ENCODE measurements at regions of chr1 and their contacts with region 1.

Region 1: DNA sequence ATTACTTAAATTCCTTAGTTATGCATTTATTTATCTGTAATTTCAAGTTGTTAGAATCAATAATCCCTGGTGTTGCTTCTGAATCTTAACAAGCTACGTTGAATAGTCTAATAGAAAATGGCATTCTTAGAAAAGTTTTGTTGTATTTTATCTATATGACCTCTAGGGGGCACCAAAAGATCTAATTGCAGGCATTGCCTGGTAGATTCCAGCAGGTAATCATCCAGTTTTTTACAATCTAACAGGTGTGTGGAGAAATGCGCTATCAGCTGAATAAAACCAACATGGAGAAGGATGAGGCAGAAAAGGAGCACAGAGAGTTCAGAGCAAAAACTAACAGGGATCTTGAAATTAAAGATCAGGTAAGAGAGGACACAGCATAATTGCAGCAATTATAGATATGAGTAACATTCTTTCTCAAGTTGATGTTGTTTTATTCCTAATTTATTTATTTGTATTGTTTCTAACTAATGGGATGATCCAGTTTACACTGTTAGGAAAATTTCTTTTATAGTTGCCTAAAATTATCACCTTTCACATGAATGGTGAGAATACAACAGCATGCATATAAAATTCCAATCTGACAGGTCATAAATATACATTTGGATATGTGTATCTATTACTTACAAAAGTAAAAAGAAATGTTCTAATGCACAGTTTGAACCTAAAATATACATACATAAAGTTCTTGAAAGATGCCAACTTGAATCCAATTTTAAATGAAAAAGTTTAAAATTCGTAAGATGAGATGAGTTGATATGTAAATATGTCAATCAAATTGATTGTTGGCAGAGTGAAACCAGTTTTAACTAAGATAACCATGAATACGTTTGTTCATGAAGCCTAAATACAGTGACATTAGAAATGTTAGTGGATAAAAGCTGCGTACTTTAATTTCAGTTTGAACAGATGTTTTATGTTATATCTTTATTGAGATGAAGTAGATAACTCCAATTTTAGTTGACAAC is 88.4 kb downstream of the SDCCAG8 start:
- DNase-seq: peak; percentile 25 to 51
- ATAC-seq: peak; percentile 66 to 75; a peak in 5 of 6 replicates
- H3K4me3 ChIP-seq: no peak overlapping the region
- H3K27ac ChIP-seq: no peak overlapping the region
- H3K4me1 ChIP-seq: peaks cover 11% of the 10 kb centered on the region; the same call in 2 of the 3 replicates
- CTCF ChIP-seq: peak; percentile 93
- EP300 ChIP-seq: no peak
- POLR2A ChIP-seq: no peak
- RAD21 ChIP-seq: peak; percentile 88 to 89

Region 2: GRCh38 chr1:242966892-242967291 is 377.4 kb before region 1 on chr1:
- CTCF ChIA-PET with region 1: no interaction called
- POLR2A ChIA-PET with region 1: no interaction called
- DNase-seq: no peak
- ATAC-seq: no peak
- H3K4me3 ChIP-seq: no peak overlapping the region
- H3K27ac ChIP-seq: no peak overlapping the region
- H3K4me1 ChIP-seq: no peaks in the 10 kb centered on the region
- CTCF ChIP-seq: no peak
- EP300 ChIP-seq: no peak
- POLR2A ChIP-seq: no peak
- RAD21 ChIP-seq: no peak

Region 3: GRCh38 chr1:243354511-243355153 is 10.4 kb after region 1 on chr1:
- CTCF ChIA-PET with region 1: interaction called, 10 read pairs
- POLR2A ChIA-PET with region 1: no interaction called
- DNase-seq: no peak
- ATAC-seq: no peak
- H3K4me3 ChIP-seq: no peak overlapping the region
- H3K27ac ChIP-seq: no peak overlapping the region
- H3K4me1 ChIP-seq: no peaks in the 10 kb centered on the region
- CTCF ChIP-seq: no peak
- EP300 ChIP-seq: no peak
- POLR2A ChIP-seq: no peak
- RAD21 ChIP-seq: no peak

Region 4: GRCh38 chr1:243413431-243414151 is 69.3 kb after region 1 on chr1:
- CTCF ChIA-PET with region 1: no interaction called
- POLR2A ChIA-PET with region 1: no interaction called
- DNase-seq: no peak
- ATAC-seq: no peak
- H3K4me3 ChIP-seq: no peak overlapping the region
- H3K27ac ChIP-seq: no peak overlapping the region
- H3K4me1 ChIP-seq: no peaks in the 10 kb centered on the region
- CTCF ChIP-seq: no peak
- EP300 ChIP-seq: no peak
- POLR2A ChIP-seq: no peak
- RAD21 ChIP-seq: no peak

Region 5: DNA sequence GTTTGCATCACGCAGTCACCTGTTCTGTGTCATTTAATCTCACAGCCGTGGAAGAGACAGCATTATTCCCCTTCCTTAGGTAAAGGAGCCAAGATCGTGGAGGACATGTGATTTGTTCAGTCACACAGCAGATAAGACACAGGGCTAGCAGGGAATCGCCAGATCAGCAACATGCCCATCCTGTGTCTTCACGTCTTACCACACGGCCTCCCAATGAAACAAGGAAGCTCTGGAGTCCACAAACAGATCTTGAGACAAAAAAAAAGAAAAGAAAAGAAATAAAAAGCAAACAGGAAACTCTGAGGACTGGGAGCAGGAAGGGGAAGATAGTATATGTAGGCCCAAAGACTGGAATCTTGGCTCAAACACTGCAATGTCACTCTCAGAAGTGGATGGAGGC is 952.2 kb after region 1 on chr1:
- CTCF ChIA-PET with region 1: interaction called, 42 read pairs
- POLR2A ChIA-PET with region 1: no interaction called
- DNase-seq: no peak
- ATAC-seq: no peak
- H3K4me3 ChIP-seq: no peak overlapping the region
- H3K27ac ChIP-seq: peak overlapping the region; percentile 13 to 45; a peak in 4 of 6 replicates
- H3K4me1 ChIP-seq: peaks cover 5% of the 10 kb centered on the region; the same call in 2 of the 3 replicates
- CTCF ChIP-seq: no peak
- EP300 ChIP-seq: no peak
- POLR2A ChIP-seq: no peak
- RAD21 ChIP-seq: no peak

Region 6: DNA sequence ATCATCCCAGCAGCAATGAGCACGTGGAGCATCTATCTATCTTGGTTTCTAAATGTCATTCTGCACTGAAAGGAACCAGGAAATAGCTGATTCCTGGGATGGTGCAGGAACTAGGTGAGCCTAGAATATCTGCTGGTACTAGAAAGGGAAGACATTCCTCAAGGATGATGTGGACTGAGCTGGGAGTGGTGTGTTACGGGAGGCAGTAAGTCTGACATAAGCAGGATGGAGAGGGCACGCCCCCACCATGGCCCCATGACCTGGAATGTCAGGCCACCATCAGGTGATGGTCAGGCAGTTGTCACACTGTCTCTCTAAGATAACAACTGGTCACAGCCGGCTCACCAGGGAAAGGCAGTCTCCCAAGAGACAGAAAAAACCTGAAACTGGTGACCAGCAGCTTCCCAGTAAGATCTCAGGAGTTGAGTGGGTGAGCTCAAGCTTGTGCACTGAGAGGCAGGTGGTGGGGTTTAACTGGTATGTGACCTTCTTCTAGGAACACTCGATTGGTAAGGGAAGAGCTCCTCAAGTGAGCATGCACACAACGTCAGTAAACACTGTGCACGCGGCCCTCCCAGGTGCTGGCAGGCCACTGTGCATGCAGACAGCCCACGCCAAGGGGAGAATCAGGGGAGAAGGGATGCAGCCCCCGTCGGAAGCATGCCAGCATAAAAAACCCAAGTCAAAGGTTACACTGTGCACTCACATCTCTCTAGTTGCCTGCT is 958.8 kb after region 1 on chr1:
- CTCF ChIA-PET with region 1: interaction called, 42 read pairs
- POLR2A ChIA-PET with region 1: no interaction called
- DNase-seq: peak; percentile 83 to 89
- ATAC-seq: peak; percentile 89 to 94
- H3K4me3 ChIP-seq: no peak overlapping the region
- H3K27ac ChIP-seq: peak overlapping the region; percentile 59 to 79
- H3K4me1 ChIP-seq: peaks cover 30% of the 10 kb centered on the region
- CTCF ChIP-seq: no peak
- EP300 ChIP-seq: no peak
- POLR2A ChIP-seq: no peak
- RAD21 ChIP-seq: 0 out of 5 replicates have a peak, but pooled peaks of 1 of the 2 experiments have one; percentile 17